Naive thymus-derived CD4-positive, alpha-beta T cell (primary cell): ENCODE measurements at regions of chr17 and their contacts with region 1.

Region 1: GRCh38 chr17:17823433-17824118 is 13.2 kb downstream of the SREBF1 start:
- DNase-seq: peak; percentile 71 to 84 (median 81)
- ATAC-seq: peak; percentile 93
- H3K4me3 ChIP-seq: peak overlapping the region; percentile 68
- H3K4me3 Mint-ChIP-seq: peak overlapping the region; percentile 78 to 86 (median 84)
- H3K27ac ChIP-seq: peak overlapping the region; percentile 74
- H3K27ac Mint-ChIP-seq: peak overlapping the region; percentile 78 to 96 (median 93)
- H3K4me1 ChIP-seq: peaks cover 41 to 81% of the 10 kb centered on the region in 2 donors
- H3K4me1 Mint-ChIP-seq: peaks cover 72 to 95% (median 87%) of the 10 kb centered on the region in 7 donors
- H3K27me3 ChIP-seq: no peaks in the 10 kb centered on the region
- H3K27me3 Mint-ChIP-seq: no peaks in the 10 kb centered on the region

Region 2: DNA sequence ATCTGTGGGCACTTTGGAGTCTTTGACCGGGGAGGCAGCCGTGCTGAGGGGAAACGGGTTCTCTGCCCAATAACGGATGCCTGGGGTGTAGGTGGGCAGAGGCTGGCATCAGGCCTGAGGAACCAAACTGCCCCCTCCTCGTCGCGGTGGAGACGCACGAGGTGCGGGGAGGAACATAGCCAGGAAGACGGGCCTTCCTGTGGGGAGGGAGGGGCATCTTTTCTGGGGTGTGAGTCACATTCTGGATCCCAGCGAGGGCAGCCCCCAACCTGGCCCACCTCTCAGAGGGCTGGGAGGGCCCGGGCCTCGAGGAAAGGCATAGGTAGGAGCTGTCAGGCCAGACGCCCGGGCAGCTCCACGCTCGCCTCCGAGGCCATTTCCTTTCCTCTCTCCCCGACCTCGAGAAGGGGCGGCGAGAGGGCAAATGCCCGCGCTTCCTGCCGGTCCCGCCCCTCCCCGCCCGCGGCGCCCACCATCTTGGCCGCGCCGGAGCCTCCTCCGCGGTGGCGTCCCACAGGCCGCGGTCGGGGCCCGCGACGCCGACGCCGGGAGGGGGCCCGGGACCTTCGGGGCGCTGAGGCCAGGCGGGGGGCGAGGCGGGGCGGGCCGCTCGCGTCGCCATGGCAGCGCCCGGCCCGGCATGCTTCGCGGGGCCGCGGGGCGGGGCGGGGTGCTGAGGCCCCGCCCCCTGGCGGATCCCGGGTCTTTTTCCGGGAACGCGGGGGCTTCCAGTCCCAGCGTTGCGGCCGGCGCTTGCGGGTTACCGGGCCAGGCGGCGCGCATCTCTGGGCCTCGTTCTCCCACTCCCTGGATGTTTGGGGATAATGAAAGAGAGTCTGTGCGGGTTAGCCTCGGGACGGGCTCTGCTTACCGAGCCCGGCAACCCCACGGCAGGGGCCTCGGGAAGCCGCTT is 129.2 kb before region 1 on chr17:
- CTCF ChIA-PET with region 1: no interaction called
- POLR2A ChIA-PET with region 1: no interaction called
- intact Hi-C with region 1: loop called in 1 of 2 experiments (anchors 1 kb)
- DNase-seq: peak; percentile 65 to 83 (median 72)
- ATAC-seq: peak; percentile 87
- H3K4me3 ChIP-seq: peak overlapping the region; percentile 84
- H3K4me3 Mint-ChIP-seq: peak overlapping the region; percentile 88 to 96 (median 92)
- H3K27ac ChIP-seq: peak overlapping the region; percentile 93
- H3K27ac Mint-ChIP-seq: peak overlapping the region; percentile 95 to 99 (median 98)
- H3K4me1 ChIP-seq: peaks cover 15 to 51% of the 10 kb centered on the region in 2 donors
- H3K4me1 Mint-ChIP-seq: peaks cover 46 to 81% (median 72%) of the 10 kb centered on the region in 7 donors
- H3K27me3 ChIP-seq: no peaks in the 10 kb centered on the region
- H3K27me3 Mint-ChIP-seq: no peaks in the 10 kb centered on the region

Region 3: DNA sequence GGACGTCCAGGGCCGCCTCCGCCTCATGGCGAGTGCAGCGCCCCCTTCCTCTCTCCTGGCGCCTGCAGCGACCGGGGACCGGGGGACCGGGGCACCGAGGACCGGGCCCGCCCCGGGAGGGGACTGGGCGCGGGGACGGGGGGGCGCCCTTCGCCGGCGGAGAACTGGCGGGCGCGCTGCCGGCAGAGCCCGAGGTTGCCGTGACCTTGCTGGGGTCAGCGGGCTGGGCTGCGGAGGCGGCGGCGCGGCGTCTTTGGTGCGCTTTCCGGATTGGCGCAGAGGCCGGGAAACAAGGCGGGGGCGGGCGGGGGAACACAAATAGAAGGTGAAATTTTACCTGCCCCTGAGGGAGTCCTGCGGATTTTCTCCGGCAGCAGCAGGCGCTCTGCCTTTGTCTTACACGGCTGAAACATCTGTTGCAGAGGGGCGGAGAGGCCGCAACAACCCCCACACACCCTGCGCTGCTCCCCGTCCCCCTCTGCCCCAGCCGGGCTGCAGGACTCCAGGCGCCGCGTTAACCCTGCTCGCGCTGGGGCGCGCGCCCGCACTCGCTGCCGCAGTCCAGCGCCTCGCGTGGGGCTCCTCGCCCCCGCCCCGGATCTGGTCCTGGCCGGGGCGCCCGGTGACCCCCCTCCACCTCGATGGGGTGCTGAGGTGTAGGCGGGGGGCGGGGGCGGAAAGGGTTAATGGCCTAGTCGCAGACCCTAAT is 40.3 kb before region 1 on chr17:
- CTCF ChIA-PET with region 1: no interaction called
- POLR2A ChIA-PET with region 1: no interaction called
- intact Hi-C with region 1: loop called in 1 of 2 experiments (anchors 1 kb)
- DNase-seq: peak; percentile 39 to 67 (median 63)
- ATAC-seq: peak; percentile 71
- H3K4me3 ChIP-seq: peak overlapping the region; percentile 72
- H3K4me3 Mint-ChIP-seq: peak overlapping the region; percentile 80 to 95 (median 91)
- H3K27ac ChIP-seq: peak overlapping the region; percentile 67
- H3K27ac Mint-ChIP-seq: peak overlapping the region in 7 of 9 donors; percentile 10 to 88 (median 74)
- H3K4me1 ChIP-seq: peaks cover 7 to 15% of the 10 kb centered on the region in 2 donors
- H3K4me1 Mint-ChIP-seq: peaks cover 15 to 32% (median 25%) of the 10 kb centered on the region in 7 donors
- H3K27me3 ChIP-seq: no peaks in the 10 kb centered on the region
- H3K27me3 Mint-ChIP-seq: peaks cover 0 to 29% (median 0%) of the 10 kb centered on the region in 5 donors

Region 4: GRCh38 chr17:17836250-17836817 is 12.8 kb after region 1 on chr17:
- CTCF ChIA-PET with region 1: interaction called, 6 read pairs
- POLR2A ChIA-PET with region 1: interaction called, 22 read pairs
- intact Hi-C with region 1: loop called (anchors 1 kb)
- DNase-seq: peak; percentile 93 to 99 (median 97)
- ATAC-seq: peak; percentile 85
- H3K4me3 ChIP-seq: peak overlapping the region; percentile 86
- H3K4me3 Mint-ChIP-seq: peak overlapping the region; percentile 85 to 95 (median 90)
- H3K27ac ChIP-seq: peak overlapping the region; percentile 99
- H3K27ac Mint-ChIP-seq: peak overlapping the region; percentile 94 to 99 (median 98)
- H3K4me1 ChIP-seq: peaks cover 18 to 60% of the 10 kb centered on the region in 2 donors
- H3K4me1 Mint-ChIP-seq: peaks cover 46 to 79% (median 75%) of the 10 kb centered on the region in 7 donors
- H3K27me3 ChIP-seq: no peaks in the 10 kb centered on the region
- H3K27me3 Mint-ChIP-seq: no peaks in the 10 kb centered on the region

Region 5: DNA sequence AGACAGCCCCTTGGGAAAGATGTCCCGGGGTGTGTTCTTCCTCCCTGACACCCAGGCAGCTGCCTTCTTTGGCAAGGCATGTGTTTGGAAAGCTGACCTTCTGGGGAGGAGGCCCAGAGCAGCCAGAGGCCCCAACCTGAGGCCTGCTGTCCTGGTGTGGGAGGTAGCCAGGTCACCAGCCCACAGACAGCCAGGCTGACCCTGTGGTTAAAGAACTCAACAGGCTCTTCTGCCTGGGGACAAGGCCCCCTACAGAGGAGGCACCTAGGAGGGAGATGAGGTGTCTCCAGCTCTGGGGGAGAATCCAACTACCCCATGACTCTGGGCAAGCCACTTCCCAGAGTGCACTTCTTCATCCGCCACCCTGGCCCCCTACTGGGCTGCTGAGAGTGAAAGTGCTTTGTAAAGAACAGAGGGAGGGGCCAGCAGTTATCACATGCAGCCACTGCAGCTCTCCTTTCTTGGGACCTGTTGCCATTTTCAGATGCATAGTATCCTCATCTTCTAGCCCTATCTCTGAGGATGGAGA is 26.3 kb after region 1 on chr17:
- CTCF ChIA-PET with region 1: interaction called, 4 read pairs
- POLR2A ChIA-PET with region 1: interaction called, 5 read pairs
- intact Hi-C with region 1: loop called (anchors 1 kb)
- DNase-seq: peak; percentile 33 to 74 (median 69)
- ATAC-seq: peak; percentile 78
- H3K4me3 ChIP-seq: peak overlapping the region; percentile 17
- H3K4me3 Mint-ChIP-seq: peak overlapping the region; percentile 70 to 81 (median 76)
- H3K27ac ChIP-seq: peak overlapping the region; percentile 70
- H3K27ac Mint-ChIP-seq: peak overlapping the region; percentile 95 to 98 (median 96)
- H3K4me1 ChIP-seq: peaks cover 35 to 61% of the 10 kb centered on the region in 2 donors
- H3K4me1 Mint-ChIP-seq: peaks cover 45 to 82% (median 73%) of the 10 kb centered on the region in 7 donors
- H3K27me3 ChIP-seq: no peaks in the 10 kb centered on the region
- H3K27me3 Mint-ChIP-seq: no peaks in the 10 kb centered on the region

Region 6: GRCh38 chr17:17877529-17878358 is 54.2 kb after region 1 on chr17:
- CTCF ChIA-PET with region 1: no interaction called
- POLR2A ChIA-PET with region 1: no interaction called
- intact Hi-C with region 1: no loop called
- DNase-seq: no peak
- ATAC-seq: no peak
- H3K4me3 ChIP-seq: no peak overlapping the region
- H3K4me3 Mint-ChIP-seq: no peak overlapping the region
- H3K27ac ChIP-seq: no peak overlapping the region
- H3K27ac Mint-ChIP-seq: peak overlapping the region in 1 of 9 donors; percentile 26
- H3K4me1 ChIP-seq: no peaks in the 10 kb centered on the region
- H3K4me1 Mint-ChIP-seq: peaks cover 0 to 2% (median 0%) of the 10 kb centered on the region in 7 donors
- H3K27me3 ChIP-seq: no peaks in the 10 kb centered on the region
- H3K27me3 Mint-ChIP-seq: no peaks in the 10 kb centered on the region

Region 7: GRCh38 chr17:17950806-17951205 is 127.2 kb after region 1 on chr17:
- CTCF ChIA-PET with region 1: no interaction called
- POLR2A ChIA-PET with region 1: no interaction called
- intact Hi-C with region 1: no loop called
- DNase-seq: no peak
- ATAC-seq: no peak
- H3K4me3 ChIP-seq: no peak overlapping the region
- H3K4me3 Mint-ChIP-seq: no peak overlapping the region
- H3K27ac ChIP-seq: no peak overlapping the region
- H3K27ac Mint-ChIP-seq: peak overlapping the region in 1 of 9 donors; percentile 80
- H3K4me1 ChIP-seq: peaks cover 0 to 10% of the 10 kb centered on the region in 2 donors
- H3K4me1 Mint-ChIP-seq: peaks cover 21 to 78% (median 53%) of the 10 kb centered on the region in 7 donors
- H3K27me3 ChIP-seq: no peaks in the 10 kb centered on the region
- H3K27me3 Mint-ChIP-seq: no peaks in the 10 kb centered on the region

Region 8: DNA sequence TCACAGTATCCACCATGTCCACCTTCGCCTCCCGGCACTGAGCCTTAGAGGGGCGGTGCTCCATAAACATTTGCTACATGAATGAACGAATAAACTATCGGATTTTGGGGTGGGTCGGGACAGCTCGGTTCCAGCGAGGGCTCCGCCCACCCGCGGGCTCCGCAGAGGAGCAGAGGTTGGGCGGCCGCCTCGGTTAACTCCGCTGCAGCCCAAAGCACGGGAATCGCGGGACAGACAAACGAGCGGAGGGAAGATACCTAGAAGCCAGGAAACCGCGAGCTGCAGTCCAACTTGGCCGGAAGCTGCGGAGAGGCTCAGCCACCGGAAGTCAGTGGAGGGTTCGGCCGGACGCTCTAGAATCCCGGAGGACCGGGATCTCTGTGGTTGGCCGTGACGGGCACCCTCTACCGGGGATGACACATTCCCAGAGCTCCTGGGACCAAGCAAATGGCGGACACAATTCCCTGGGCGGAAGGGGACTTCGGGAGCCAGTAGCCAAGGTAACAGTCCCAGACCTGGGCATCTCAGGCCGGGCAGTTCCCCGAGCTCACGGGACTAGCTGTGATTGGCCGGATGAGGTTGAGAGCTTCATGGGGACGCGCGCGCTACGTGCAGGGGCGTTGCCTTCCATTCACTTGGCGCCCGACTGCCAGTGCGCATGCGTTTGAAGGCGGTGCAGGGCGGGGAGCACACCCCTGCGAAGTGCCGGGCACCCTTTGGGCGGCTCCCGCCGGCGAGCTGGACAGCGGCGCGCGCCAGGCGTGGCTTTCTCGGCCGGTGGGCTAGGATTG is 1554.2 kb after region 1 on chr17:
- CTCF ChIA-PET with region 1: no interaction called
- POLR2A ChIA-PET with region 1: no interaction called
- intact Hi-C with region 1: loop called in 1 of 2 experiments (anchors 5 kb)
- DNase-seq: peak; percentile 85 to 95 (median 92)
- ATAC-seq: peak; percentile 89
- H3K4me3 ChIP-seq: peak overlapping the region; percentile 99
- H3K4me3 Mint-ChIP-seq: peak overlapping the region; percentile 83 to 100 (median 97)
- H3K27ac ChIP-seq: peak overlapping the region; percentile 81
- H3K27ac Mint-ChIP-seq: peak overlapping the region; percentile 83 to 99 (median 97)
- H3K4me1 ChIP-seq: peaks cover 2 to 6% of the 10 kb centered on the region in 2 donors
- H3K4me1 Mint-ChIP-seq: peaks cover 6 to 29% (median 20%) of the 10 kb centered on the region in 7 donors
- H3K27me3 ChIP-seq: no peaks in the 10 kb centered on the region
- H3K27me3 Mint-ChIP-seq: no peaks in the 10 kb centered on the region